ENCODE measurements at regions of chr20 and their contacts with region 1.

Region 1: GRCh38 chr20:53891306-53891944 is 179.0 kb downstream of the BCAS1 start:
- DNase-seq: no peak
- H3K4me3 Mint-ChIP-seq: no peak overlapping the region
- H3K27ac Mint-ChIP-seq: no peak overlapping the region
- H3K4me1 Mint-ChIP-seq: peaks cover 43% of the 10 kb centered on the region
- H3K27me3 Mint-ChIP-seq: no peaks in the 10 kb centered on the region

Region 2: GRCh38 chr20:53149148-53149889 is 742.1 kb before region 1 on chr20:
- intact Hi-C with region 1: no loop called
- DNase-seq: no peak
- H3K4me3 Mint-ChIP-seq: peak overlapping the region; percentile 49
- H3K27ac Mint-ChIP-seq: peak overlapping the region; percentile 43
- H3K4me1 Mint-ChIP-seq: peaks cover 44% of the 10 kb centered on the region
- H3K27me3 Mint-ChIP-seq: no peaks in the 10 kb centered on the region

Region 3: GRCh38 chr20:53692413-53693067 is 198.9 kb before region 1 on chr20:
- intact Hi-C with region 1: loop called (anchors 2 kb)
- DNase-seq: peak; percentile 64
- H3K4me3 Mint-ChIP-seq: peak overlapping the region; percentile 56
- H3K27ac Mint-ChIP-seq: peak overlapping the region; percentile 46
- H3K4me1 Mint-ChIP-seq: peaks cover 37% of the 10 kb centered on the region
- H3K27me3 Mint-ChIP-seq: no peaks in the 10 kb centered on the region

Region 4: GRCh38 chr20:53773792-53774401 is 117.5 kb before region 1 on chr20:
- intact Hi-C with region 1: loop called (anchors 5 kb)
- DNase-seq: no peak
- H3K4me3 Mint-ChIP-seq: no peak overlapping the region
- H3K27ac Mint-ChIP-seq: no peak overlapping the region
- H3K4me1 Mint-ChIP-seq: peaks cover 7% of the 10 kb centered on the region
- H3K27me3 Mint-ChIP-seq: no peaks in the 10 kb centered on the region

Region 5: DNA sequence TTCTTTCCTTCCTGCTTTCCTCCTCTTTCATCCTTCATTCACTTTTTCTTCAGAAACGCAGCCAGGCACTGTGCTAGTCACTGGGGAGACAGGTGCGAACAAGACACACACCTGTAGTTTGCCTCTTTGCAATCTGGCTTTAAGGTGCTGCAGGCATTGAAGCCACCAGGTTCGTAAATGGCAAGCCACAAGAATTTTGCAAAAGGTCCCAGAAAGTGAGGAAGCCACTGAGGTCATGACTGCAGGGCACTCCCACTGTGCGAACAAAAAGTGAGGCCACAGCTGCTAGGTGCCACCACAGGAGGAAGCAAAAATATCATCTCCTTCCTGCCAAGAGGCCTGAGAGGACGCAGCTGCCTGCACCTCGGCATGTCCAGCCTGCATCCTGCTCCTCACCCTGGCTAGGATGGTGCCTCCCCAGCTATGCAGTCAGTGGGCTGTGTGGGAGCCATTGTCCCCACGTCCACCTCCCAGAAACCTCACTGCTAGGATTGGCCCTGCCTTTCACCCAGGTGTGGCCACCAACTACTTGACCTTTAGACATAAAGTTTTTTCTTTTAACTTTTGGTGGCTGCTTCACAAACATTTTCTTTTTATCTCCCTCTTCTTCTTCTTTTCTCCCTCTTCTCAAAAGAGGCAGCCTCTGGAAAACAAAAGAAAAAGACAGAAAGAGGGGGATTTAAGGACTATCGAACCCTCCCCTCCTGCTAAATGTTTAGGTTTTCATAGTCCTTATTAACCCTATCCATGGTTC is 51.8 kb before region 1 on chr20:
- intact Hi-C with region 1: loop called (anchors 2 kb)
- DNase-seq: peak; percentile 88
- H3K4me3 Mint-ChIP-seq: peak overlapping the region; percentile 85
- H3K27ac Mint-ChIP-seq: peak overlapping the region; percentile 98
- H3K4me1 Mint-ChIP-seq: peaks cover 58% of the 10 kb centered on the region
- H3K27me3 Mint-ChIP-seq: no peaks in the 10 kb centered on the region

Measured in activated CD4-positive, alpha-beta T cell treated with anti-CD3 and anti-CD28 coated beads, Interleukin-2, amount 10 ng/mL, durations not matched to agents 24 days and 14 days (primary cell).